ENCODE measurements at regions of chr9 and their contacts with region 1.

Region 1: GRCh38 chr9:133522073-133523035 is 2.4 kb downstream of the MYMK start:
- DNase-seq: no peak
- ATAC-seq: no peak

Region 2: GRCh38 chr9:133485361-133486260 is 36.7 kb before region 1 on chr9:
- intact Hi-C with region 1: loop called (anchors 1 kb)
- DNase-seq: no peak
- ATAC-seq: peak; percentile 3